CD8-positive, alpha-beta T cell (primary cell): ENCODE measurements at regions of chr1 and their contacts with region 1.

Region 1: DNA sequence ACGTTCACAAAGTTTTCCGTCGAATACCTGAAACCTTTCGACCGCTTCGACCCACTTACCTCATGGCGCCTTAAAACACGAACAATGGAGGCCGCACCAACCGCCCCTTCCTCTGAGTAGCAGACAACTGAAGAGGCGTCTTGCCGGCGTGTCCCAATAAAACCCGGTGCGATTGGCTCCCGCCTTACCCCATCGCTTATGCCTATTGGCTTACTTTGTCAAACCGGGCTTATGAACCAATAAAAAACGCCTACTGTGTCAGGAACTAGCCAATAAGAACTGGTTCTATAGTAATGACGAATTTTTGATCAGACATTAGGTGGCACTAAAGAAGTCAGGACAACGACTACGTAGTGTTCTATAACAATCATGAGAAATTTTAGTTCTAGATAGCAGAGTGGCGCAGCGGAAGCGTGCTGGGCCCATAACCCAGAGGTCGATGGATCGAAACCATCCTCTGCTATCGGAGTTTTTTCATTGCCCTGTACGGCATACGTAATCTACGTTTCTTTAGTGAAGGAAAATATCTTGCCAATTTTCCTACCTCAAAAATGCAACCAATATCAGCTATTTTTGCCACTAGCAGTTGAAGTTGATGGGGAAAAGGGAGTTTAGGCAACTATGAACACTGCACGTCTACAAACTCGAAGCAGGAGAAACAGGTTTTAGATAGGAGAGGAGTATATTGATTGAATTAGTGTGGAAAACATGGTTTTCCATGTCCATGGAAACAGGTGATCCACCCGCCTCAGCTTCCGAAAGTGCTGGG is at the start of gene ILF2:
- DNase-seq: peak; percentile 89 to 99 (median 97)
- ATAC-seq: peak; percentile 87
- H3K4me3 ChIP-seq: peak within 1 kb of the TSS; percentile 76 to 81
- H3K4me3 Mint-ChIP-seq: no peak within 1 kb of the TSS
- H3K27ac ChIP-seq: peak within 1 kb of the TSS; percentile 89 to 94
- H3K27ac Mint-ChIP-seq: peak within 1 kb of the TSS; percentile 67
- H3K4me1 ChIP-seq: peaks cover 22% of the 10 kb centered on the region
- H3K4me1 Mint-ChIP-seq: peaks cover 20% of the 10 kb centered on the region
- H3K27me3 ChIP-seq: no peaks in the 10 kb centered on the region
- H3K27me3 Mint-ChIP-seq: peaks cover under 1% of the 10 kb centered on the region
- CTCF ChIP-seq: no peak
- total RNA-seq, gene ILF2: 150 to 156 TPM

Region 2: DNA sequence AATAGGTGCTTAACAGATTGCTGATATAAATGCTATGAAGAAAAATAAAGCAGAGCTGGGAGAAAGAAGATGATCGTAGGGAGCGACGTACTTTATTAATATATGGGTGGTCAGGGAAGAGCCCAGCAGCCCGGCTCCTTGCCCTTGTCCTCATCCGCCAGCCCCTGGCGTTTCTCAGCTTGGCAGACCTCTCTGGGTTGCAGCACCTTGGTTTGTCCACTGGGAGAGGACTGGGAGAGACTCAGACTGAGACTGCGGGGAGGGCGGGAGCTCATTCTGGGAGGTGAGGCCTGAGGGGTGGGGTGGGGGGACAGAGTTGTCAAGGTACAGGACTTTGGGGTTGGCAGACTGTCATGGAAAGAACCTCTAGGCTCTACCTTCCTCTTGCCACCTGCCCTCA is 118.7 kb before region 1 on chr1:
- CTCF ChIA-PET with region 1: no interaction called
- POLR2A ChIA-PET with region 1: no interaction called
- intact Hi-C with region 1: no loop called
- DNase-seq: no peak
- ATAC-seq: no peak
- H3K4me3 ChIP-seq: no peak overlapping the region
- H3K4me3 Mint-ChIP-seq: no peak overlapping the region
- H3K27ac ChIP-seq: no peak overlapping the region
- H3K27ac Mint-ChIP-seq: no peak overlapping the region
- H3K4me1 ChIP-seq: no peaks in the 10 kb centered on the region
- H3K4me1 Mint-ChIP-seq: peaks cover 2% of the 10 kb centered on the region
- H3K27me3 ChIP-seq: no peaks in the 10 kb centered on the region
- H3K27me3 Mint-ChIP-seq: no peaks in the 10 kb centered on the region
- CTCF ChIP-seq: no peak

Region 3: DNA sequence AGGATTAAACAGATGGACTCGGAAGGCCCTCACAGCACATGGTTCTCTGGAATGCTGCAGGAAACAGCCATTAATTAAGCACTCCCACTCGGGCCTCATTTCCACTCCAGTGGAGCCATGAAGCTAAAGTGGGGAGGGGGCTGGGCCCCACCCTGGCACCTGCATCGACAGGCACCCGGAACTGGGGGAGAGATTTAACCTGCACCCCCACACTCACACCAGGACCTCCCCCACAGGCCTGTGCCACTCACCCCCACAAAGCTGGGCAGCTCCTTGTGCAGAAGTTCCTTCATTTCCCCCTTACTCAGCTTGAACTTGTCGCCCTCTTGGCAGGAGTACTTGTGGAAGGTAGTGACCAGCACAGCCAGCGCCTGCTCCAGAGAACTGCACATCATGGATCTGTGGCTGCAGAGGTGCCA is 107.6 kb before region 1 on chr1:
- CTCF ChIA-PET with region 1: no interaction called
- POLR2A ChIA-PET with region 1: no interaction called
- intact Hi-C with region 1: no loop called
- DNase-seq: no peak
- ATAC-seq: no peak
- H3K4me3 ChIP-seq: no peak overlapping the region
- H3K4me3 Mint-ChIP-seq: no peak overlapping the region
- H3K27ac ChIP-seq: no peak overlapping the region
- H3K27ac Mint-ChIP-seq: no peak overlapping the region
- H3K4me1 ChIP-seq: peaks cover 14% of the 10 kb centered on the region
- H3K4me1 Mint-ChIP-seq: peaks cover 22% of the 10 kb centered on the region
- H3K27me3 ChIP-seq: no peaks in the 10 kb centered on the region
- H3K27me3 Mint-ChIP-seq: no peaks in the 10 kb centered on the region
- CTCF ChIP-seq: no peak

Region 4: GRCh38 chr1:153658400-153659174 is 12.5 kb before region 1 on chr1 and contains the start of gene SNAPIN:
- CTCF ChIA-PET with region 1: interaction called, 4 read pairs
- POLR2A ChIA-PET with region 1: interaction called, 8 read pairs
- intact Hi-C with region 1: loop called (anchors 1 kb)
- DNase-seq: peak; percentile 75 to 93 (median 88)
- ATAC-seq: peak; percentile 96
- H3K4me3 ChIP-seq: peak within 1 kb of the TSS; percentile 83 to 85
- H3K4me3 Mint-ChIP-seq: peak within 1 kb of the TSS; percentile 96
- H3K27ac ChIP-seq: peak within 1 kb of the TSS; percentile 66 to 90
- H3K27ac Mint-ChIP-seq: peak within 1 kb of the TSS; percentile 92
- H3K4me1 ChIP-seq: peaks cover 12% of the 10 kb centered on the region
- H3K4me1 Mint-ChIP-seq: peaks cover 12% of the 10 kb centered on the region
- H3K27me3 ChIP-seq: no peaks in the 10 kb centered on the region
- H3K27me3 Mint-ChIP-seq: no peaks in the 10 kb centered on the region
- CTCF ChIP-seq: no peak
- total RNA-seq, gene SNAPIN: 6.1 to 6.5 TPM

Region 5: DNA sequence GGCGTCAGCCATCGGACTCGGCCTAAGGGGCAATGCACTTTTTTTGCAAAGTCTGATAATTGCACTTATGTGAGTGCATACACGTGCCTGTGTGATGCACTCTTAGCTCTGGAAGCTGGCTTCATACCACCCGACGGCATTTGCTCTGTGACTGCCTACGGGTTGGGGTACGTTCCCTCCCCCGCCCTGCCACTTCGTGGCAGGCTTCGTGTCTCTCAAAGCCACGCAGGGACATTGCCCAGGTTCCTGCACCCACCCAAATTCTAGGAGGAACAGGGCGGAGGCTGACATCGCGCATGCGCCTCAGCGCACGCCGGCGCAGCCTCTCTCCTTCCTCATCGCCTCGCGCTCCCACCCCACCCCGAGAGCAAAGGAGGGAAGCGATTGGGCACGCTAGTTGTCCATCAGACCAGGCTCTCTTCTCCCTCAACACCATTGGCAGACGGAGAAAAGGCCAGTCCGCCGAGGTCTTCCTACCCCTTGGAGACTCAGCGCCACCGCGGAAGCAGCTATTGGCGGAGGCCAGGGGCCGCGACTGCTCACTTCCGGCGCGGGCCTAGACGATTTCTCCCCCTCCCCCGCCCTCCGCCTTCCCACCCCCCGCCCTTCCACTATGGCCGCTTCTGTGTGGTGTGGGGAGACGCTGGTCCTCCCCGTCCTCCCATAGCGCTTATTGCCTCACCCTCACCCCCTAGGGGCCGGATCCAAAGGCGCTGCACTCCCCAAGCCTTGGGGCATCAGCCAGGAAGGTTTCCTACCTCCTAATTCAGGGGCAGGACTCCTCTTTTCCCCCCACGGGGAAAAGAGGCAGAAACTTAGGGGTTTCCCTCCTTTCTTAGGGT is 56.6 kb after region 1 on chr1 and contains the start of gene INTS3:
- CTCF ChIA-PET with region 1: no interaction called
- POLR2A ChIA-PET with region 1: interaction called, 3 read pairs
- intact Hi-C with region 1: loop called (anchors 1 to 5 kb)
- DNase-seq: peak; percentile 97 to 100 (median 99)
- ATAC-seq: peak; percentile 98
- H3K4me3 ChIP-seq: peak within 1 kb of the TSS; percentile 86 to 93
- H3K4me3 Mint-ChIP-seq: peak within 1 kb of the TSS; percentile 93
- H3K27ac ChIP-seq: peak within 1 kb of the TSS; percentile 91 to 96
- H3K27ac Mint-ChIP-seq: peak within 1 kb of the TSS; percentile 99
- H3K4me1 ChIP-seq: peaks cover 21% of the 10 kb centered on the region
- H3K4me1 Mint-ChIP-seq: peaks cover 34% of the 10 kb centered on the region
- H3K27me3 ChIP-seq: no peaks in the 10 kb centered on the region
- H3K27me3 Mint-ChIP-seq: no peaks in the 10 kb centered on the region
- CTCF ChIP-seq: no peak
- total RNA-seq, gene INTS3: 21.6 to 23.5 TPM

Region 6: GRCh38 chr1:153749408-153750005 is 78.5 kb after region 1 on chr1:
- CTCF ChIA-PET with region 1: interaction called, 19 read pairs
- POLR2A ChIA-PET with region 1: no interaction called
- intact Hi-C with region 1: no loop called
- DNase-seq: peak; percentile 66 to 85 (median 77)
- ATAC-seq: peak; percentile 100
- H3K4me3 ChIP-seq: no peak overlapping the region
- H3K4me3 Mint-ChIP-seq: no peak overlapping the region
- H3K27ac ChIP-seq: no peak overlapping the region
- H3K27ac Mint-ChIP-seq: no peak overlapping the region
- H3K4me1 ChIP-seq: no peaks in the 10 kb centered on the region
- H3K4me1 Mint-ChIP-seq: peaks cover 4% of the 10 kb centered on the region
- H3K27me3 ChIP-seq: no peaks in the 10 kb centered on the region
- H3K27me3 Mint-ChIP-seq: no peaks in the 10 kb centered on the region
- CTCF ChIP-seq: peak; percentile 97

Region 7: DNA sequence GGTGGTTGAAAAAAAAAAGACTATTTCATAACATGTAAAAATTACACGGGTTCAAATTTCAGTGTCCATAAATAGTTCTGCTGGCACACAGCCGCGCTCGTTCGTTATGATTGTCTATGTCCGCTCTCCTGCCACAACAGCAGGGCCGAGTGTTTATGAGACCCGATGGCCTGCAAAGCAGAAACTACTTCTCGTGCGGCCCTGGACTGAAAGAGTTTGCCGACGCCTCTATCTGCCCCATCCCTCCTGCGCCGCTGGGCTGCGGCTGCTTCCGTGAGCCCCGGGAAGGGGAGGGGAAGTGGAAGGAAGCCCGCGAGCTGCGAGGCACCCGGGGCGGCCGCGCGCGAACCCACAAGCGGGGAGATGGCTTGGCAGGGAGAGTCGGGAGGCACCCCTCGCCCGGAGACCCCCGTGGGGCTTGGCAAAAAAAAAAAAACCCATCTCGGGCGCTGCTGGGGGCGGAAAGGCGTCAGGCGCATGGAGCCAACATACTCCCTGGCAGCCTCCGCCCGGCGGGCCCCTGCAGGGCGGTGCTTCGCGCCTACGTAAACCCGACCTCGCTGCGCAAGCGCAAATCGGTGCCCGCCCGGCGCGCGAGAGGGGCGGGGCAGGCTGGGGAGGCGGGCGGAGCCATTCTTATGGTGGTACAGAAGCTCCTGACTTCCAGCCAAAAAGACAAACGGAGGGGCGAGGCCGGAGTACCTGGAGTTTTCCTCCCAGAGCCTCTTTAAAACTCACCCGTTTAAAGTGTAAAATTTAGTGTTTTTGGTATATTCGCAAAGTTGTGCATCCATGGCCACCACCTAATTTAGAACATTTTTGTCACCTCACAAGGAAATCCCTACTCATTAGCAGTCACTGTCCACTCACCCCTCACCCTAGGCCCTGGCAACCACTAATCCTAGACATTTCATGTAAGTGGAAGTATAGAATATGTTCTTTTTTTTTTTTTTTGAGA is 112.5 kb after region 1 on chr1:
- CTCF ChIA-PET with region 1: no interaction called
- POLR2A ChIA-PET with region 1: no interaction called
- intact Hi-C with region 1: loop called in 1 of 2 experiments (anchors 1 kb)
- DNase-seq: peak; percentile 84 to 96 (median 91)
- ATAC-seq: peak; percentile 98
- H3K4me3 ChIP-seq: peak overlapping the region; percentile 91 to 93
- H3K4me3 Mint-ChIP-seq: peak overlapping the region; percentile 88
- H3K27ac ChIP-seq: peak overlapping the region; percentile 92 to 99
- H3K27ac Mint-ChIP-seq: peak overlapping the region; percentile 95
- H3K4me1 ChIP-seq: peaks cover 12% of the 10 kb centered on the region
- H3K4me1 Mint-ChIP-seq: peaks cover 10% of the 10 kb centered on the region
- H3K27me3 ChIP-seq: no peaks in the 10 kb centered on the region
- H3K27me3 Mint-ChIP-seq: no peaks in the 10 kb centered on the region
- CTCF ChIP-seq: no peak